Gastrocnemius medialis (tissue), 4 donors: ENCODE measurements at regions of chr1 and their contacts with region 1.

Region 1: GRCh38 chr1:156740679-156741612 is at the start of gene MRPL24:
- DNase-seq: peak; percentile 99
- ATAC-seq: peak; percentile 97 to 98
- H3K4me3 ChIP-seq: peak within 1 kb of the TSS; percentile 73 to 94 (median 76)
- H3K27ac ChIP-seq: peak within 1 kb of the TSS; percentile 87 to 99 (median 92)
- H3K4me1 ChIP-seq: peaks cover 27 to 29% of the 10 kb centered on the region in 2 donors
- H3K27me3 ChIP-seq: no peaks in the 10 kb centered on the region
- CTCF ChIP-seq: peak in 1 of 5 experiments; percentile 8
- POLR2A ChIP-seq: peak; percentile 14 to 36
- total RNA-seq, gene MRPL24: 54.9 to 121 (median 102) TPM

Region 2: DNA sequence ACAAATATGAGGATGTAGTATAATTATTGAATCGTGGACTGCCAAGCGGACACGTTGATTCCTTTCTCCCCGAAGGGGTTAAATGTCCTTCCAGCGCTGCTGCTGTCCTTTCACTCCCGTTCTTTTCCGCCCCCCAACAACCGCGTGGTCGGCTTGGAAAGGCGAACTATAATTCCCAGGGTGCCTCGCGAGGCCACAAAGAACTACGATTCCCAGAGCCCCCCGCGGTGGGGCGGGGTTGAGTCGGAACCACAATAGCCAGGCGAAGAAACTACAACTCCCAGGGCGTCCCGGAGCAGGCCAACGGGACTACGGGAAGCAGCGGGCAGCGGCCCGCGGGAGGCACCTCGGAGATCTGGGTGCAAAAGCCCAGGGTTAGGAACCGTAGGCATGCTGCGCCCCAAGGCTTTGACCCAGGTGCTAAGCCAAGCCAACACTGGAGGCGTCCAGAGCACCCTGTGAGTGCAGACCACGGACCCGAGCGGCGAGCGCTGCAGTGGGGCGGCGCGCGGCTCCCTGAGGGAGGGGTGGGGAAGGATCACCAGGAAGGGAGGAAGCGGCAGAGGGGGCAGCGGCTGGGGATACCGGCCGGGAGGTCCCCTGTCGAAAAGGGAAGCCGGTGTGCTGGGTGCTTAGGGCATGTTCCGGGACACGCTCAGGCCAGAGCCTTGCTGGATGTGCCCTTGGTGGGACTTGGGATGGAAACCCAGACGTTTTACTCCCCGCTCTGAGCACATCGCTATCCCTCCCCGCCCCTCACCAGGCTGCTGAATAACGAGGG is 686.3 kb before region 1 on chr1 and contains the start of gene LAMTOR2:
- in situ Hi-C with region 1: loop called in 1 of 4 experiments (anchors 25 kb)
- intact Hi-C with region 1: no loop called
- DNase-seq: peak; percentile 98
- ATAC-seq: peak; percentile 82 to 87
- H3K4me3 ChIP-seq: peak within 1 kb of the TSS; percentile 91 to 95 (median 92)
- H3K27ac ChIP-seq: peak within 1 kb of the TSS; percentile 92 to 99 (median 98)
- H3K4me1 ChIP-seq: peaks cover 17 to 26% of the 10 kb centered on the region in 2 donors
- H3K27me3 ChIP-seq: no peaks in the 10 kb centered on the region
- CTCF ChIP-seq: no peak
- POLR2A ChIP-seq: peak; percentile 69 to 80
- total RNA-seq, gene LAMTOR2: 51.5 to 82.7 (median 72.6) TPM

Region 3: DNA sequence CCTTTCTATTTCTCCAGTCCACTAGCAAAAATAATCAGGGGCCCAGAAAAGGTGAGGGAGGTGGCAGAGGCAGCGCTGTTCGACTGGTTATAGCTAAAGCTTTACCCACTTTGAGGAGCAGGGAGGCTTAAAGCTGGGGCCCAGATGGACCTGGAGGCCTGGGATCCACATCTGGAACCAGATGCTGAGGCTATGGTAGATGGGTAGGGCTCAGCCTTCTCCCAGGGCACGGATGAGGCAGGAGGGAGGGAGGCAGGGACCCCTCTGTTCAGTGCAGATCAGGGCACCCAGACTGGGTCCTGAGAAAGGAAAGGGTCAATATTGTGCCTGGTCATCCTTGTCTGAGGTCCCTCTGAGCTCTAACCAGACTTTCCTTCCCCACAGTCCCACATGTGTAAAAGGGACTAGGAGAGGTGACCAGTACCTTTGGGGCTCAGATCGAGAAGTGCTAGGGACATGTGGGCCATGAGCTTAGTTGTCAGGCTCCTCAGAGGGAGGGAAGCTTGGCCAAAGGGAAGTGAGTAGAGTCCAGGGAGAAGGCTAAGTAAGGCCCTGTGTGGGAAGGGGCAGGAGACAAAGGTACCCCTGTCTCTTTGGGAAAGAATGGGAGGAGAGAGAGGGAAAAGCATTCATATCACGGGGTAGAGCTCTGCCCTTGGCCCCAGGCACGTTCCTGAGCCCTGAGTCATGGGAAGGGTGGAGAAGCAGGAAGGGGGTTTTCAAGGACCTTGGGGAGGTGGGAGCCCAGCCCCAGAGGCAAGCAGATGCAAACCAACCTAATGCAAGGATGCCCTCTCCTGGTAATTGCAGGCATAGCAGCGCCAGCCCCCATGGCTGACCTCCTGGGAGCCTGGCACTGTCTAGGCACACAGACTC is 611.0 kb before region 1 on chr1:
- in situ Hi-C with region 1: no loop called
- intact Hi-C with region 1: loop called (anchors 10 kb)
- DNase-seq: peak; percentile 64 to 88
- ATAC-seq: peak; percentile 59 to 79
- H3K4me3 ChIP-seq: peak overlapping the region in 2 of 4 donors; percentile 8 to 42
- H3K27ac ChIP-seq: peak overlapping the region; percentile 98 to 99 (median 98)
- H3K4me1 ChIP-seq: peaks cover 53 to 59% of the 10 kb centered on the region in 2 donors
- H3K27me3 ChIP-seq: no peaks in the 10 kb centered on the region
- CTCF ChIP-seq: peak; percentile 98 to 99 (median 99)
- POLR2A ChIP-seq: no peak

Region 4: GRCh38 chr1:156338180-156338973 is 402.6 kb before region 1 on chr1 and contains the starts of genes CCT3 and TSACC:
- in situ Hi-C with region 1: no loop called
- intact Hi-C with region 1: loop called (anchors 10 kb)
- DNase-seq: peak; percentile 98 to 100
- ATAC-seq: peak; percentile 95 to 98
- H3K4me3 ChIP-seq: peak within 1 kb of the TSS; percentile 69 to 91 (median 84)
- H3K27ac ChIP-seq: peak within 1 kb of the TSS; percentile 92 to 97 (median 96)
- H3K4me1 ChIP-seq: peaks cover 12 to 19% of the 10 kb centered on the region in 2 donors
- H3K27me3 ChIP-seq: no peaks in the 10 kb centered on the region
- CTCF ChIP-seq: no peak
- POLR2A ChIP-seq: peak; percentile 72 to 86
- total RNA-seq, gene CCT3: 147 to 189 (median 180) TPM
- total RNA-seq, gene TSACC: not detected

Region 5: DNA sequence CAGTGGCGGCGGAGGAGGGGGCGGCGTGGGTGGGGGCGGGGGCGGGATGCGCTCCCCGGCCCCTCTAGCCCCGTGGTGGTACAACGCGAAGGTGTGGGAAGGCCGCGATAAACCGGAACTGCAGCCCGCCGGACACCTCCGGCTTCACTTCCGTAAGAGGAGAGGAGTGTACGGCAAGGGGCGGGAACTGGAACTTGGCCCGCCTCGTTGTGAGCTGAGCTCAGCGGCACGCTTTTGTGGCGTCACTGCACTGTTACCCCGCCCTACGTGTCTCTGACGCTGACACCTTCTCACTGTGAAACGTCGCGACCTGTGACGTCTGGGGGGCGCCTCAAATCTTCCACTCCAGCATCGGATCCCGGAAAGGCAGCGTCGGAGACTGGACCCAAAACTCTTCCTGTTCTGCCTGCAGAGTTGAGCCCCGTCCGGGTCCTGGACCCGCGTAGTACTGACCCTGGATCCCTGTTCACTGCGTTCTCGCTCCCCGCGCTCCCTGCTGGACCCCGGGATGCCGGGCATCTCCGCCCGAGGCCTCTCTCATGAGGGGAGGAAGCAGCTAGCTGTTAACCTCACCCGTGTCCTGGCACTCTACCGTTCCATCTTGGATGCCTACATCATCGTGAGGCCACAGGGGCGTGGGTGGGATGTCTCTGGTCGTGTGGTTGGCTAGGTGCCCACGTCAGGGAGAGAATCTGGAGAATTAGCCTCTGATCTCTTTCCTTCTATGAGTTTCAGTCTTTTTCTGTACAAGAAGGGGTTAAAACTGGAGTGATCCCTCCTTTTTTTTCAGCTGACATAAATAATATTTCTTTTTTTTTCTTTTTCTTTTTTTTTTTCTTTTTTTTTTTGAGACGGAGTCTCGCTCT is 12.1 kb before region 1 on chr1 and contains the start of gene ISG20L2:
- in situ Hi-C with region 1: no loop called
- intact Hi-C with region 1: loop called (anchors 1 kb)
- DNase-seq: peak; percentile 97
- ATAC-seq: peak; percentile 94 to 96
- H3K4me3 ChIP-seq: peak within 1 kb of the TSS; percentile 68 to 94 (median 84)
- H3K27ac ChIP-seq: peak within 1 kb of the TSS; percentile 91 to 98 (median 94)
- H3K4me1 ChIP-seq: peaks cover 35 to 37% of the 10 kb centered on the region in 2 donors
- H3K27me3 ChIP-seq: no peaks in the 10 kb centered on the region
- CTCF ChIP-seq: no peak
- POLR2A ChIP-seq: peak; percentile 14 to 48
- total RNA-seq, gene ISG20L2: 9.5 to 16.4 (median 15.1) TPM

Region 6: GRCh38 chr1:156767101-156767878 is 26.3 kb after region 1 on chr1 and contains the start of gene PRCC:
- in situ Hi-C with region 1: no loop called
- intact Hi-C with region 1: loop called (anchors 1 kb)
- DNase-seq: peak; percentile 99
- ATAC-seq: peak; percentile 96
- H3K4me3 ChIP-seq: peak within 1 kb of the TSS; percentile 76 to 98 (median 90)
- H3K27ac ChIP-seq: peak within 1 kb of the TSS; percentile 87 to 98 (median 94)
- H3K4me1 ChIP-seq: peaks cover 35 to 40% of the 10 kb centered on the region in 2 donors
- H3K27me3 ChIP-seq: no peaks in the 10 kb centered on the region
- CTCF ChIP-seq: peak in 1 of 5 experiments; percentile 14
- POLR2A ChIP-seq: peak; percentile 74 to 84
- total RNA-seq, gene PRCC: 42.8 to 62.3 (median 46.5) TPM

Region 7: GRCh38 chr1:156860113-156860627 is 119.2 kb after region 1 on chr1:
- in situ Hi-C with region 1: no loop called
- intact Hi-C with region 1: no loop called
- DNase-seq: no peak
- ATAC-seq: peak; percentile 71 to 78
- H3K4me3 ChIP-seq: peak overlapping the region; percentile 28 to 50 (median 45)
- H3K27ac ChIP-seq: no peak overlapping the region
- H3K4me1 ChIP-seq: peaks cover 10 to 22% of the 10 kb centered on the region in 2 donors
- H3K27me3 ChIP-seq: peaks cover 49 to 55% (median 51%) of the 10 kb centered on the region in 3 donors
- CTCF ChIP-seq: peak; percentile 61 to 91 (median 88)
- POLR2A ChIP-seq: no peak

Region 8: DNA sequence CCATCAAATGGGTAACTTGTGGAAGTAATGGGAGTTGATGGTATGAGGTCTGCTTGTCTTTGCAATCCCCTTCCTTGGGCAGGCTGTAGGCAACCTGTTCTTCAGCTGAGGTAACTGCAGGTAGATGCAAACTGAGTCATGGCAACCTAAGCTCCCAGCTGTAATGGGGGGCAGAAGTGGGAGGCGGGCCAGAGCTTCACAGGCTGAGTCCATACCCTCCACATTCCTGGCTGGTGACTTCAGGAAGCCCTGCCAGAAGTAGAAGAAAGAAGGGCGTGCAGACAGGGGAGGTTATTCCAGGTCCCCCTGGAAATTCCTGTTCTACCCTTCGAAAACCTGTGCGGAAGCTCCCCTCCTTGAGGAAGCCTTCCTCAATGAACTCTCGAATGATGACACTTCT is 259.7 kb after region 1 on chr1:
- in situ Hi-C with region 1: no loop called
- intact Hi-C with region 1: no loop called
- DNase-seq: no peak
- ATAC-seq: no peak
- H3K4me3 ChIP-seq: no peak overlapping the region
- H3K27ac ChIP-seq: no peak overlapping the region
- H3K4me1 ChIP-seq: peaks cover 4 to 8% of the 10 kb centered on the region in 2 donors
- H3K27me3 ChIP-seq: no peaks in the 10 kb centered on the region
- CTCF ChIP-seq: no peak
- POLR2A ChIP-seq: no peak